RWPE1 (cell line): ENCODE measurements at regions of chr11 and their contacts with region 1.

Region 1: GRCh38 chr11:67353317-67354074 is at the start of gene POLD4:
- DNase-seq: peak; percentile 95
- H3K27ac ChIP-seq: peak within 1 kb of the TSS; percentile 97
- CTCF ChIP-seq: no peak

Region 2: GRCh38 chr11:67373925-67374618 is 20.6 kb after region 1 on chr11:
- CTCF ChIA-PET with region 1: interaction called, 113 read pairs
- POLR2A ChIA-PET with region 1: interaction called, 11 read pairs
- DNase-seq: peak; percentile 96
- H3K27ac ChIP-seq: peak overlapping the region; percentile 97
- CTCF ChIP-seq: peak; percentile 62